Tibial artery (tissue), 4 donors: ENCODE measurements at regions of chr6 and their contacts with region 1.

Region 1: DNA sequence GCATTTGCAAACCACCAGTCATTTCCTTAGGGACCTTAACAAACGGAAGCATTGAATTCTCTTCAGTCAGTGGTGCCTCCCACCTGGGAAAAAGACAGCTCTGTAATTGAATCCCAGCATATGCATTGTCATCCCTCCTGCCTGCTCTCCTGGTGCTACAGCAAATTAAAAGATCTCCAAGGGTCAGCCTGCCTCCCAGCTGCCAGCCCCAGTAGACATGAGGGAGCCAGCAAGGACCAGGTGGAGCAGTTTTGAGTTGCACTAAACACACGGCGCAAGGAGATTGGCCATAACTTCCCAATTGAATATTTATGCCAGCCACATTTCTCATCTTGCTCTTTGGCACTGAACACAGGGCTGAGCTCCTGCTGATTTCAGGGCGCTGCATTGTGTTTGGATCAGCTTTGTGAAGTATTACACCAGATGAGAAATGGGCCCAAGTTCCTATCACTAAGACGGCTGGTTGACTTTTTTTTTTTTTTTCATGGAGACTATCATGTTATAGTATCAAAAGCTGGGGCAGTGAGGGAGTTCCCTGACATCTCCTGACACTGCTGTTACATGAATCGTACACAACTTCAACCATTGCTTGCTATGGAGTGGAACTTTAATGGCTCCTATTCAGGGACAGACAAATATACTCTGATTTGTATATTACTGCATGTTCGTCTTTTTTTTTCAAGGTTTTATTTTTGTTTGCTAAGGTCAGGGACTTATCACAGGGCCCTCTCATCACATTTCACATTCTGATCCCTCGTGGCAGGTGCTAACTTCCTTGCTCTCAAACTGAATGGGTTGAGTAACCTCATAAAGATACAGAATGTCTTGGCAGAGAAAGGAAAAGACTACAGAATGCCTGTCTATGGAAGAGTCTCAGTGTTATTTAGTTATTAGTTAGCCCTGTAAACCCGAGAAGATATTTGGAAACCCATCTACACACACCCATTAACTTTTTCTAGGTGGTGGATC is 191.1 kb downstream of the EYA4 start:
- DNase-seq: no peak
- H3K4me3 ChIP-seq: no peak overlapping the region
- H3K27ac ChIP-seq: no peak overlapping the region
- H3K4me1 ChIP-seq: no peaks in the 10 kb centered on the region
- H3K27me3 ChIP-seq: no peaks in the 10 kb centered on the region
- CTCF ChIP-seq: no peak

Region 2: GRCh38 chr6:135212020-135212806 is 1779.9 kb after region 1 on chr6:
- intact Hi-C with region 1: loop called (anchors 5 kb)
- DNase-seq: no peak
- H3K4me3 ChIP-seq: no peak overlapping the region
- H3K27ac ChIP-seq: no peak overlapping the region
- H3K4me1 ChIP-seq: no peaks in the 10 kb centered on the region
- H3K27me3 ChIP-seq: no peaks in the 10 kb centered on the region
- CTCF ChIP-seq: no peak